Psoas muscle (tissue), 8 donors: ENCODE measurements at regions of chr3 and their contacts with region 1.

Region 1: DNA sequence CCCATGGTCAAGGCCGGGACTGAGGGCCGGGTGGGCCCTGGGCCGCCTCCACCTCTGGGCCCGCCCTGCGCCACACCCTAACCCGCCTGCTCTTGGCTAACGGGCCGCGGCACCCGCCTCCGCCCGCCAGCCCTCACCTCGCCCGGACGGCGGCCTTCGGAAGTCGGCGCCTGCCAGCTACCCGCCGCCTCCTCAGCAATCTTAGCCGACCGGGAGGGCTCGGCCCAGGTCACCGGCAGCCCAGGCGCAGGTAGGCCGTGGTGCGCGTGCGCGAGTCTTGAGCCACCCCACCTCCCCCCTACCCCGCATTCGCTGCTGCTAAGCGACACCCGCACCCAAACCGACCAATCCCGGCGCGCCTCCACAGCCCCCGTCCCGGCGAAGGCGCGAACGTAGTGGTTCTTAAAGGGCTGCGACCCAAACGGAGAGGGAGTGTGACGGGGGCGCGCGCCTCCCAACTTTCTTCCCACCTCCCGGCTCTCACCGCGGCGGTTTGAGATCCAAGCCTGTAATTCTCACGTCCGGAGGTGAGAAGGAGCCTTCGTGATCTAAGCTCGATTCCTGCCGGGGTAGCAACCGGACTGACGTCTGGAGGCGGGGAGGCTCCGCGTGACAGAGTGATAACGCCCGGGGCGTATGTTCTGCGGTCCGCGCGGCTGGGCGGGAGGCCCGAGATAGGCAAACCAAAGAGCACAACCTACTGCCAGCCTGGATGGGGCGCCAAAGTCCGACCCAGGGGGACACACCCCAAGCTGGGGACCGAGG is at the start of gene SEC22C:
- DNase-seq: peak; percentile 95 to 97
- ATAC-seq: peak; percentile 98 to 99 (median 99)
- H3K4me3 ChIP-seq: peak within 1 kb of the TSS; percentile 82
- H3K27ac ChIP-seq: peak within 1 kb of the TSS; percentile 85
- H3K4me1 ChIP-seq: peaks cover 16% of the 10 kb centered on the region
- H3K27me3 ChIP-seq: no peaks in the 10 kb centered on the region
- CTCF ChIP-seq: peak; percentile 31
- total RNA-seq, gene SEC22C: 13.0 to 31.0 (median 15.5) TPM

Region 2: GRCh38 chr3:42711491-42712343 is 129.8 kb after region 1 on chr3:
- intact Hi-C with region 1: no loop called
- DNase-seq: peak in 1 of 2 donors; percentile 34
- ATAC-seq: peak; percentile 20 to 39 (median 30)
- H3K4me3 ChIP-seq: no peak overlapping the region
- H3K27ac ChIP-seq: no peak overlapping the region
- H3K4me1 ChIP-seq: peaks cover under 1% of the 10 kb centered on the region
- H3K27me3 ChIP-seq: no peaks in the 10 kb centered on the region
- CTCF ChIP-seq: no peak

Region 3: GRCh38 chr3:42749753-42750231 is 167.9 kb after region 1 on chr3:
- intact Hi-C with region 1: loop called in 1 of 2 experiments (anchors 5 kb)
- DNase-seq: no peak
- ATAC-seq: peak; percentile 53 to 76 (median 67)
- H3K4me3 ChIP-seq: no peak overlapping the region
- H3K27ac ChIP-seq: no peak overlapping the region
- H3K4me1 ChIP-seq: peaks cover 15% of the 10 kb centered on the region
- H3K27me3 ChIP-seq: no peaks in the 10 kb centered on the region
- CTCF ChIP-seq: peak; percentile 40

Region 4: DNA sequence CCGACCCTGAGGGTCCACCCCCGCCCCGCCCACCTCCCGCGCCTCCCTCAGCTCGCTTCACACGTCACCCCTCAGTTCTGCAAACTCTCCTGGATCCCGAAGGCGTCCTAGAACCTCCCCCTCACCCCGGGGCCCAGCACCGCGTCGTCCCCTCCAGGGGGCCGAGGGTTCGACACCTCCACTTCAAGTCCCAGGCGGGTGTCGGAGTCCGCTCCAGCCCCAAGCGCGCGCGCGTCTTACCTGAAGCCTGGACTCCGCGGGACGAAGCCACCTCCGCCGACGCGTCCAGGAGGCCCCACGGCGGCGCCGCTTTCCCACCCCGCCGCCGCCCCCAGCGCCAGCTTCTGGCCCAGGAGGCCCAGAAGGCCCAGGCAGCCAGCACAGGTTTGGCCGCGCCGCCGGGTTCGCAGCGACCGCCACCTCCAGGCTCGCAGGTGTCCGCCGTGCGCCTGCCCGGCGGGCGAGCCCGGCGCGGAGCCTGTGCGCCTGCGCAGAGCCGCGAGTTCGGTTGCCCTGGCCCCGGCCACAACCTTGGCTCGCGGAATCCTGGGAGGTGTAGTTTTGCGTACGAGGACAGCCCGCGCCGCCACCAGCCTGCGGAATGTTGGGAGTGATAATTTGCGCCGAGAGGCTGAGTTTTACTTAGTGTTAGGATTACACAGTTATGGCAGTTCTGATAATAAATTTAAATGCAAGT is 523.9 kb after region 1 on chr3 and contains the start of gene POMGNT2:
- intact Hi-C with region 1: no loop called
- DNase-seq: peak; percentile 91 to 95
- ATAC-seq: peak; percentile 97 to 99 (median 98)
- H3K4me3 ChIP-seq: peak within 1 kb of the TSS; percentile 96
- H3K27ac ChIP-seq: peak within 1 kb of the TSS; percentile 71
- H3K4me1 ChIP-seq: peaks cover 6% of the 10 kb centered on the region
- H3K27me3 ChIP-seq: no peaks in the 10 kb centered on the region
- CTCF ChIP-seq: no peak
- total RNA-seq, gene POMGNT2: 13.2 to 25.5 (median 19.8) TPM